ENCODE measurements at regions of chr10 and their contacts with region 1.

Region 1: GRCh38 chr10:20858292-20859124 is 38.6 kb downstream of the NEBL start:
- DNase-seq: peak; percentile 53
- ATAC-seq: peak; percentile 51; the same call in 1 of the 2 replicates
- H3K4me3 ChIP-seq: no peak overlapping the region
- H3K27ac ChIP-seq: no peak overlapping the region
- H3K4me1 ChIP-seq: no peaks in the 10 kb centered on the region
- H3K27me3 ChIP-seq: no peaks in the 10 kb centered on the region
- CTCF ChIP-seq: peak; percentile 74

Region 2: DNA sequence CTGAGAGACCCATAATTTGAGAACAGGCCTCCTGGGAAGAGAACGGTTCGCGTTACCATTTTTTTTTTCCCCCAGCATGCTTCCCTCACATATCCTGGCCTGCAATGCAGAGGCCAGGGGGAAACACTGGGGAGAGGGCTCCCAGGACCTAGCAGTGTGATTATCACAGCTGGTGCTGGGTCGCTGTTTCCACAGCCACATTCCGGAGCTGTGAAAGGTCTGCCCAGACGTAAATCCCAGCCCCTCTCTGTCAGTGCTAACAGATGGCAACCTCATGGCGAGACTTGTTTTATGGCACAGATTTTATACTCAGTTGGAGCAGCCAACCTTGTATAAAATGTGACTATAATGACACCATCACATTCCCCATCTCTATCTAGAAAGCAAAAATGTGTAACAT is 891.8 kb before region 1 on chr10:
- CTCF ChIA-PET with region 1: no interaction called
- POLR2A ChIA-PET with region 1: no interaction called
- intact Hi-C with region 1: no loop called
- DNase-seq: no peak
- ATAC-seq: no peak
- H3K4me3 ChIP-seq: no peak overlapping the region
- H3K27ac ChIP-seq: no peak overlapping the region
- H3K4me1 ChIP-seq: no peaks in the 10 kb centered on the region
- H3K27me3 ChIP-seq: no peaks in the 10 kb centered on the region
- CTCF ChIP-seq: no peak

Region 3: GRCh38 chr10:20648263-20648874 is 210.1 kb before region 1 on chr10:
- CTCF ChIA-PET with region 1: no interaction called
- POLR2A ChIA-PET with region 1: no interaction called
- intact Hi-C with region 1: no loop called
- DNase-seq: no peak
- ATAC-seq: no peak
- H3K4me3 ChIP-seq: no peak overlapping the region
- H3K27ac ChIP-seq: no peak overlapping the region
- H3K4me1 ChIP-seq: no peaks in the 10 kb centered on the region
- H3K27me3 ChIP-seq: no peaks in the 10 kb centered on the region
- CTCF ChIP-seq: no peak

Region 4: GRCh38 chr10:21135023-21135931 is 276.8 kb after region 1 on chr10:
- CTCF ChIA-PET with region 1: no interaction called
- POLR2A ChIA-PET with region 1: no interaction called
- intact Hi-C with region 1: no loop called
- DNase-seq: peak; percentile 94
- ATAC-seq: peak; percentile 92
- H3K4me3 ChIP-seq: peak overlapping the region; percentile 56; the same call in 1 of the 2 replicates
- H3K27ac ChIP-seq: peak overlapping the region; percentile 98
- H3K4me1 ChIP-seq: peaks cover 28% of the 10 kb centered on the region
- H3K27me3 ChIP-seq: no peaks in the 10 kb centered on the region
- CTCF ChIP-seq: no peak

Region 5: DNA sequence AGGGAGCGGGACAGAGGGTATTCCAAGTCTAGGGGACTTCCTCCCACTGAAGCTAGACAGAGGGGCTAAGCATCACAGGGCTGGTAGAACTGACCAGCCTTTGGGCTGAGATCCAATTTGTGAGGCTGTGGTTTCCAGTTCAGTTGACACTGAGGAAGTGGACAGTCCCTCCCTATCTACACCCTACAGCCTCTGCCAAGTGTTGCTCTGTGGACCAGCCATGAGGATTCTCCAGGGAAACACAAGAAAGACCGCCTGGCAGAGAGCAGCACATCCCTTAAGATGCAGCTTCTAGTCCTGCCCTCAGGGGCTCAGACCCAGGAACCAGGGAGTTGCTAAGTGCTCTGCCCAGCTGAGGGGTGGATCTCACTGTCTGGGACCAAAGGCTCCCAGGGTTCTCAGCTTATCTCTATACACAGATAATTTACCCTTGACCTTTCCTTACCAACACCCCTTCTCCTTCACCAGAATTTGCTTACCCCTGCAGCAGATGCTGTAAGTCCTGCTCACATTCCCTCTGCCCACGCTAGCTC is 415.0 kb after region 1 on chr10:
- CTCF ChIA-PET with region 1: no interaction called
- POLR2A ChIA-PET with region 1: no interaction called
- intact Hi-C with region 1: loop called (anchors 1 kb)
- DNase-seq: peak; percentile 38
- ATAC-seq: peak; percentile 59
- H3K4me3 ChIP-seq: no peak overlapping the region
- H3K27ac ChIP-seq: peak overlapping the region; percentile 75
- H3K4me1 ChIP-seq: peaks cover 19% of the 10 kb centered on the region
- H3K27me3 ChIP-seq: no peaks in the 10 kb centered on the region
- CTCF ChIP-seq: no peak